Gastrocnemius medialis (tissue), 4 donors: ENCODE measurements at regions of chr15 and their contacts with region 1.

Region 1: DNA sequence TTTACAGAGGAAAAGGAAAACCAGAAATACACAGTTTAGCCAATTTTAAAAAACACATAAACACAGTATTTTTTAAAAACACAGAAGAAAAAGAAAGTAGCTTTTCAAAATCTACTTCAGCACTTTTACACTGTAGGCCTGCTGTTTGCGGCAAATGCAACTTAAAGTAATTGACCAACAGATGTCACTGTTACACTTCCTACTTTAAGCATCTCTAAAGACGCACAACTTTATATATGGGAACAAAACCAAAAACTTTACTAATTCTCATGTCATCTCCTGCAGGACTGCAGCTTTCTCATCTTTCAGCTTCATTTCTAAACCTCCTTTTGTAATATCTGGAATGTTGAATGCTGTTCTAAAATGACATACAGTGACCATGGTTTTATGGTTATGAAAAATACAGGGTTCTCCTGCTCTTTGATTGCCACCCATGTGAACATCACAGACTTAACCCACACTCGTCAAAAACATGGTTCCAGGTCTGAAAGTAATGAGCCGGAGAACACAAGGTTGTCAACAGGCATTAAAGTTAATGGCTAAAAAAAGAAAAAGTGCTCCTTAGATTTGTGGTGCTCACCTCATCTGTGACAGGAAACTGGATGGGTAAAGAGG is 107.9 kb downstream of the FMN1 start:
- DNase-seq: no peak
- ATAC-seq: peak in 1 of 2 donors; percentile 47
- H3K4me3 ChIP-seq: no peak overlapping the region
- H3K27ac ChIP-seq: no peak overlapping the region
- H3K4me1 ChIP-seq: peaks cover 19 to 21% of the 10 kb centered on the region in 2 donors
- H3K27me3 ChIP-seq: no peaks in the 10 kb centered on the region
- CTCF ChIP-seq: peak in 3 of 5 experiments; percentile 47 to 57 (median 53)
- POLR2A ChIP-seq: no peak

Region 2: GRCh38 chr15:31733424-31733823 is 1353.2 kb before region 1 on chr15:
- in situ Hi-C with region 1: no loop called
- intact Hi-C with region 1: no loop called
- DNase-seq: no peak
- ATAC-seq: no peak
- H3K4me3 ChIP-seq: no peak overlapping the region
- H3K27ac ChIP-seq: no peak overlapping the region
- H3K4me1 ChIP-seq: no peaks in the 10 kb centered on the region
- H3K27me3 ChIP-seq: no peaks in the 10 kb centered on the region
- CTCF ChIP-seq: no peak
- POLR2A ChIP-seq: no peak

Region 3: GRCh38 chr15:33021806-33022389 is 64.7 kb before region 1 on chr15:
- in situ Hi-C with region 1: no loop called
- intact Hi-C with region 1: loop called (anchors 5 kb)
- DNase-seq: peak in 1 of 2 donors; percentile 19
- ATAC-seq: peak; percentile 80 to 90
- H3K4me3 ChIP-seq: peak overlapping the region in 1 of 4 donors; percentile 21
- H3K27ac ChIP-seq: peak overlapping the region; percentile 72 to 85 (median 76)
- H3K4me1 ChIP-seq: peaks cover 15 to 25% of the 10 kb centered on the region in 2 donors
- H3K27me3 ChIP-seq: no peaks in the 10 kb centered on the region
- CTCF ChIP-seq: peak in 4 of 5 experiments; percentile 50 to 64 (median 58)
- POLR2A ChIP-seq: no peak

Region 4: GRCh38 chr15:33132722-33133345 is 46.2 kb after region 1 on chr15:
- in situ Hi-C with region 1: loop called in 1 of 4 experiments (anchors 5 kb)
- intact Hi-C with region 1: loop called (anchors 1 kb)
- DNase-seq: no peak
- ATAC-seq: peak; percentile 49 to 53
- H3K4me3 ChIP-seq: no peak overlapping the region
- H3K27ac ChIP-seq: no peak overlapping the region
- H3K4me1 ChIP-seq: peaks cover 29 to 46% of the 10 kb centered on the region in 2 donors
- H3K27me3 ChIP-seq: no peaks in the 10 kb centered on the region
- CTCF ChIP-seq: peak; percentile 41 to 71 (median 65)
- POLR2A ChIP-seq: no peak

Region 5: DNA sequence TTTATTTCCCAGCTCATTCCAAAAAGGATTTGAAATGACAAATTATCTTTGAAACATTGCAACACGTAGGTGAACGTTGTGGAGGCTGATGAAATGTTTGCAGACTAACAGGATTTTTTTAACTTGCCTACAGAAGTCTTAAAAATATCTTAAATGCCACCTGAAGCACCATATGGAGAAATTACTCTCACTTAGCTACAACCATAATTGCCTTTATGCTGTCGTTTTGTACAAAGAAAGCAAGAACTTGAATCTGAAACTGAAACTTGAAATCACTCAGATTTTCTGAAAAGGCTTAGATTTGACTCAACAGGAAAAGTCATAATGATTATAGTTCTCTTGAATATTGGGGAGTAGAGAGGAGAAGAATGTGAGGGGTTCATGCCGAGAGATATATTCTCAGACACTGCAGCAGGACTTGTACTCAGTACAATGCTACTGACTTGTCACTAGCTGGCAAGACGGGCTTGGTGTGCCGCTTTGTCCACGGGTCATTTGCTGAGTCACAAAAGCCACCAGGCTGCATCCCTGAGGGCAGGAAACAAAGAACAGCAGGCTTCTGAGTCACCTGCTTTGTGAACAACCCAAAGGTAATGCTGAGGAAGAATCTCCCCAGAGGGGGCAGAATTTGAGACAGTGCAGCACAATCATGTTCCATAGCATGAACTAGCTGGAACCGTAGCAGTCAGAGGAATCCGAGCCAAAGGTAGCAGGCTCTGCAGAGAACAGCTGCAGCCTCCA is 115.0 kb after region 1 on chr15:
- in situ Hi-C with region 1: loop called in 1 of 4 experiments (anchors 25 kb)
- intact Hi-C with region 1: no loop called
- DNase-seq: peak; percentile 76 to 83
- ATAC-seq: peak; percentile 98 to 99
- H3K4me3 ChIP-seq: peak overlapping the region; percentile 20 to 35 (median 23)
- H3K27ac ChIP-seq: peak overlapping the region; percentile 41 to 68 (median 57)
- H3K4me1 ChIP-seq: peaks cover 18 to 21% of the 10 kb centered on the region in 2 donors
- H3K27me3 ChIP-seq: no peaks in the 10 kb centered on the region
- CTCF ChIP-seq: peak in 3 of 5 experiments; percentile 19 to 43 (median 26)
- POLR2A ChIP-seq: peak in 1 of 2 donors; percentile 15

Region 6: DNA sequence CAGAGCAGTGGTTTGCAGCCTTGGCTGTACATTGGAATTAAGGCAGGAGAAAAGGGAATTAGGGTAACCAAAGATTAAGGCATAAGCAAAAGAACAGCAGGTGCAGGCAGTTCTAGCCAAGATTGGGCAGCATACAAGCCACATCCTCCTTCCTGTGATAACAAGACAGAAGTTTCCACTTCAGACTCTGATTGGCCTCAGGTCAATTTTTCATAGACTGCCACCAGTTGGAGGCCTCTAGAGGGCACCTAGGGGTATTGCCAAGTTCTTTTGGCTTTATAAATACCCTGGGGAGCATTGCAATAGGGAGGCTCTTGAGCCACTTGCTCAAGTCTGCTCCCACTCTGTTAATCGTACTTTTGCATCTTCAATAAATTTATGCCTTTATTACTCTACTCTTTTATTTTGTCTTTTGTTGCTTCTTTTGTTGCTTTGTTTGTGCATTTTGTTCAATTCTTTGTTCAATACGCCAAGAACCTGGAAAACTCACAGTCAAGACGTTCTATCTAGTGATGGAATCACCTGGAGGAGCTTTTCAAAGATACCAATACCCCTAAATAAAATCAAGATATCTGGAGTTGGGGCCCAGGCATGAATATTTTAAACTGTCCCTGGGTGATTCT is 140.1 kb after region 1 on chr15:
- in situ Hi-C with region 1: loop called in 1 of 4 experiments (anchors 25 kb)
- intact Hi-C with region 1: loop called (anchors 10 kb)
- DNase-seq: peak; percentile 31 to 37
- ATAC-seq: peak; percentile 80 to 85
- H3K4me3 ChIP-seq: no peak overlapping the region
- H3K27ac ChIP-seq: no peak overlapping the region
- H3K4me1 ChIP-seq: peaks cover 8% of the 10 kb centered on the region in 2 donors
- H3K27me3 ChIP-seq: no peaks in the 10 kb centered on the region
- CTCF ChIP-seq: peak in 4 of 5 experiments; percentile 24 to 56 (median 32)
- POLR2A ChIP-seq: no peak

Region 7: DNA sequence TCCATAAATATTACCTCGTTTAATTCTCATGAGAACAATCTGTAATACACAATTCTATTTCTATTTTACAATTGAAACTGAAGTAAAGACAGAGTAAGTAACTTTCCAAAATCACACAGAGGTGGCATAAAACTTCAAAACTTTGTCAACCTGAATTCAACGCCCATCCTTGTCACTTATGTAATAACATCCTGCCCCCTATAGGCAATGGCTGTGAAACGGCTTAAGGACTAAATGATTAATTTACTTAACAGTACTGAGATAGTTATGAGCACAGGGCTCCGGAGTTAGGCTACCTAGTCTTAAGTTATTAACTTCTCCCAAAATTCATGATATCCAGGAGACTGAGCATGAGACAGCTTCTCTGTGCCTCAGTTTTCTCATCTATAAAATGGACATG is 588.6 kb after region 1 on chr15:
- in situ Hi-C with region 1: loop called in 1 of 4 experiments (anchors 25 kb)
- intact Hi-C with region 1: no loop called
- DNase-seq: no peak
- ATAC-seq: no peak
- H3K4me3 ChIP-seq: no peak overlapping the region
- H3K27ac ChIP-seq: no peak overlapping the region
- H3K4me1 ChIP-seq: peaks cover 0 to 13% of the 10 kb centered on the region in 2 donors
- H3K27me3 ChIP-seq: no peaks in the 10 kb centered on the region
- CTCF ChIP-seq: peak in 1 of 5 experiments; percentile 11
- POLR2A ChIP-seq: no peak

Region 8: GRCh38 chr15:33700695-33701304 is 614.2 kb after region 1 on chr15:
- in situ Hi-C with region 1: loop called in 2 of 4 experiments (anchors 10 to 25 kb)
- intact Hi-C with region 1: no loop called
- DNase-seq: peak; percentile 32 to 69
- ATAC-seq: peak; percentile 94 to 96
- H3K4me3 ChIP-seq: no peak overlapping the region
- H3K27ac ChIP-seq: no peak overlapping the region
- H3K4me1 ChIP-seq: peaks cover 6 to 12% of the 10 kb centered on the region in 2 donors
- H3K27me3 ChIP-seq: no peaks in the 10 kb centered on the region
- CTCF ChIP-seq: peak; percentile 71 to 88 (median 86)
- POLR2A ChIP-seq: no peak